Activated CD4-positive, alpha-beta memory T cell treated with anti-CD3 and anti-CD28 coated beads for 36 hours (primary cell): ENCODE measurements at regions of chr2 and their contacts with region 1.

Region 1: DNA sequence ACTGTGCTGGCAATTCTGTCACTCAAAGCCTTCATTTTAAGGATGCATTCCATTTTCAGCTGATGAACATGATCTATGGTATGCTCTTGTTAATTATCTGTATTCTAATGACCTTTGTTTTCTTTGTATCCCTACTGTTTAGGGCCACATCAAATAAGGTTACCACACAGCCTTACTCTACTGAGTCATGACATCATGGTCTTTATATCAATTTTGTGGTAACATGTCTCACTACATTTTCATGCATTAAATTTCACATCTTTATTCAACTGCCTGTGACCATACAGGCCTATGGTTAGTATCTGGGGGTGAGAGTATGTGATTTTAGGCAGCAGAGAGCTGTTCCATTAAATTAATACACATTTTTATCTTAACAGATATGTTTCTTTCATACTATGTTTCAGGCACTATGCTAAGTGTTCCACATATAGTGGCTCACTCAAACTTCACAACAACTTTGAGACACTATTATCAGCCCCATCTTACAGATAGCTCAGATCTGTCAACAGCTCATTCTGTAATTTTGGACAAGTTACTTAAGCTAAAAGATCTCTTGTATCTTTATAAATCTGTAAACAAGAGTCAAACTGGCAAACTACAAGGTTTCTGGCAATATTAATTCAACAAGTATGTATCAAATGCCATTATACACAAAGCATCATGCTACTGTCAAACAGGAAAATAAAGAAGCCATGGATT is 18.0 kb downstream of the LRPPRC start:
- DNase-seq: no peak
- H3K4me3 Mint-ChIP-seq: no peak overlapping the region
- H3K27ac Mint-ChIP-seq: no peak overlapping the region
- H3K4me1 Mint-ChIP-seq: peaks cover 6% of the 10 kb centered on the region
- H3K27me3 Mint-ChIP-seq: no peaks in the 10 kb centered on the region

Region 2: DNA sequence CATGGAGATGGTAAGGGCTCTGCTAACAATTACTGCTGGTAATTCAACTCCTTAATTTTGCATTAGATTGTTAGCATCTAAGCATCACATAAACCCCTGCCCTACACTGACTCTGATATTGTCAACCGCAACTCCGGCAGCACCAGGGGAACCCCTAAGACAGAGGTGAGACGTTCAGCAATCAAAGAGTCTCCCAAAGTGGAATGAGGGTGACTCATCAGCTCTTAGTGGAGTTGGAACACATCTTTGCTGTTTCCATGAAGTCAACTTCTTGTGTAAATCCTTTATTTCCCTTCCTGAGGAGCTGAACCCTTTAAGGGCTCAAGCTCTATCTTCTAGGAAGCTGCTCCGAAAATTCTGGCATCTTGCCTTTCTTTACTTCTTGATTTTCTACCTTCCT is 87.0 kb before region 1 on chr2:
- CTCF ChIA-PET with region 1: no interaction called
- POLR2A ChIA-PET with region 1: no interaction called
- intact Hi-C with region 1: no loop called
- DNase-seq: no peak
- H3K4me3 Mint-ChIP-seq: no peak overlapping the region
- H3K27ac Mint-ChIP-seq: no peak overlapping the region
- H3K4me1 Mint-ChIP-seq: peaks cover 2% of the 10 kb centered on the region
- H3K27me3 Mint-ChIP-seq: no peaks in the 10 kb centered on the region

Region 3: GRCh38 chr2:43905371-43905803 is 72.4 kb before region 1 on chr2:
- CTCF ChIA-PET with region 1: interaction called, 4 read pairs
- POLR2A ChIA-PET with region 1: interaction called, 3 read pairs
- intact Hi-C with region 1: loop called (anchors 10 kb)
- DNase-seq: no peak
- H3K4me3 Mint-ChIP-seq: no peak overlapping the region
- H3K27ac Mint-ChIP-seq: peak overlapping the region; percentile 23
- H3K4me1 Mint-ChIP-seq: peaks cover 25% of the 10 kb centered on the region
- H3K27me3 Mint-ChIP-seq: no peaks in the 10 kb centered on the region